Endothelial cell of umbilical vein (primary cell): ENCODE measurements at regions of chr20 and their contacts with region 1.

Region 1: GRCh38 chr20:6636209-6637159 is 131.0 kb upstream of the BMP2 start:
- DNase-seq: peak; percentile 85
- H3K4me3 ChIP-seq: no peak overlapping the region
- H3K27ac ChIP-seq: no peak overlapping the region
- H3K4me1 ChIP-seq: no peaks in the 10 kb centered on the region
- H3K27me3 ChIP-seq: no peaks in the 10 kb centered on the region
- CTCF ChIP-seq: peak; percentile 52 to 62
- POLR2A ChIP-seq: no peak

Region 2: GRCh38 chr20:6265204-6265904 is 371.1 kb before region 1 on chr20:
- CTCF ChIA-PET with region 1: interaction called, 17 read pairs
- POLR2A ChIA-PET with region 1: no interaction called
- dilution Hi-C with region 1: no loop called
- intact Hi-C with region 1: loop called (anchors 1 kb)
- DNase-seq: peak; percentile 82
- H3K4me3 ChIP-seq: peak overlapping the region in 1 of 3 experiments; percentile 59
- H3K27ac ChIP-seq: peak overlapping the region; percentile 18
- H3K4me1 ChIP-seq: peaks cover 10% of the 10 kb centered on the region
- H3K27me3 ChIP-seq: peaks cover 0 to 4% of the 10 kb centered on the region in 2 experiments
- CTCF ChIP-seq: peak; percentile 11 to 29
- POLR2A ChIP-seq: no peak

Region 3: DNA sequence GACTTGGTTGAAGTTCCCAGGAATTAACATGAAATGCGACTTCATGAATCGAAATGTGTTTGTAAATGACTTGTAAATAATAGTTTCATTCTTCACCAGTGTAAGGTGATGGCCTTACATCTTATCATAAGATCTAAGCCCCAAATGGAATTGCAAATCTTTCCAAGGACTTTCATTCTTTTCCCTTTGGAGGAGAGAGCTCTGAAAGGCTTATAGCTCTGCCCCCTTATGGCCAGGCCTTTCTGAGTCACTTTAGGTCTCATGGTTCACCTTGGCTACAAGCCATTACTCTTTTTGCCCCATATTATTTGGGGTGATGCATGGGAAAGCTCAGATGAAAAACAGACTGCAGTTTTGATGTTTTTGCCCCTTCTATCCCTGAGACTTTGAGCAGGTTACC is 78.1 kb before region 1 on chr20:
- CTCF ChIA-PET with region 1: no interaction called
- POLR2A ChIA-PET with region 1: no interaction called
- dilution Hi-C with region 1: no loop called
- intact Hi-C with region 1: no loop called
- DNase-seq: peak; percentile 18
- H3K4me3 ChIP-seq: no peak overlapping the region
- H3K27ac ChIP-seq: no peak overlapping the region
- H3K4me1 ChIP-seq: peaks cover 22% of the 10 kb centered on the region
- H3K27me3 ChIP-seq: no peaks in the 10 kb centered on the region
- CTCF ChIP-seq: no peak
- POLR2A ChIP-seq: no peak

Region 4: DNA sequence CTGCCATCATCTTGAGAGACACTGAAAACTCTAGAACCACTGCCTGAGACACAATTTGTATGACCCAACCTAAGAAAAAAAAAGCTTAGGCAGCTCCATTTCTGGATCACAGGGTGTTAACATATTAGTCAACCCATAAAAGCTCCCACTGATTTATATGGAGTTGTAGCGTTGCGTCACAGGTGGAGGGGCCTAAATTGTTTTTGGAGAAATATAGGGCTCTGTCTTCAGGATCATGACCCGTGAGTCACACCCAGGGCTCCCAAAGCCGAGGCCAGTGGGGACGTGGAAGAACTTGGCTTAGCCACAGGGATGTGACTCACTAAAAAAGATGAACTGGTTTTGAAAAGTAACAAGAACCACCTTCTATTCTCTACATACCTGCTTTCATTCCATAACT is 14.5 kb after region 1 on chr20:
- CTCF ChIA-PET with region 1: interaction called, 18 read pairs
- POLR2A ChIA-PET with region 1: no interaction called
- dilution Hi-C with region 1: no loop called
- intact Hi-C with region 1: no loop called
- DNase-seq: no peak
- H3K4me3 ChIP-seq: no peak overlapping the region
- H3K27ac ChIP-seq: no peak overlapping the region
- H3K4me1 ChIP-seq: no peaks in the 10 kb centered on the region
- H3K27me3 ChIP-seq: no peaks in the 10 kb centered on the region
- CTCF ChIP-seq: no peak
- POLR2A ChIP-seq: no peak

Region 5: GRCh38 chr20:6663104-6663503 is 26.6 kb after region 1 on chr20:
- CTCF ChIA-PET with region 1: interaction called, 13 read pairs
- POLR2A ChIA-PET with region 1: no interaction called
- dilution Hi-C with region 1: no loop called
- intact Hi-C with region 1: no loop called
- DNase-seq: peak; percentile 84
- H3K4me3 ChIP-seq: no peak overlapping the region
- H3K27ac ChIP-seq: no peak overlapping the region
- H3K4me1 ChIP-seq: peaks cover 18% of the 10 kb centered on the region
- H3K27me3 ChIP-seq: no peaks in the 10 kb centered on the region
- CTCF ChIP-seq: no peak
- POLR2A ChIP-seq: no peak

Region 6: GRCh38 chr20:6700563-6701329 is 64.3 kb after region 1 on chr20:
- CTCF ChIA-PET with region 1: interaction called, 5 read pairs
- POLR2A ChIA-PET with region 1: no interaction called
- dilution Hi-C with region 1: no loop called
- intact Hi-C with region 1: loop called (anchors 2 kb)
- DNase-seq: peak; percentile 90
- H3K4me3 ChIP-seq: no peak overlapping the region
- H3K27ac ChIP-seq: peak overlapping the region; percentile 45
- H3K4me1 ChIP-seq: peaks cover 68% of the 10 kb centered on the region
- H3K27me3 ChIP-seq: no peaks in the 10 kb centered on the region
- CTCF ChIP-seq: no peak
- POLR2A ChIP-seq: no peak

Region 7: GRCh38 chr20:6819605-6820004 is 183.1 kb after region 1 on chr20:
- CTCF ChIA-PET with region 1: interaction called, 27 read pairs
- POLR2A ChIA-PET with region 1: no interaction called
- dilution Hi-C with region 1: no loop called
- intact Hi-C with region 1: loop called (anchors 1 kb)
- DNase-seq: peak; percentile 46
- H3K4me3 ChIP-seq: no peak overlapping the region
- H3K27ac ChIP-seq: no peak overlapping the region
- H3K4me1 ChIP-seq: no peaks in the 10 kb centered on the region
- H3K27me3 ChIP-seq: peaks cover 0 to 2% of the 10 kb centered on the region in 2 experiments
- CTCF ChIP-seq: peak; percentile 16 to 27
- POLR2A ChIP-seq: no peak

Region 8: GRCh38 chr20:6855104-6855503 is 218.6 kb after region 1 on chr20:
- CTCF ChIA-PET with region 1: no interaction called
- POLR2A ChIA-PET with region 1: no interaction called
- dilution Hi-C with region 1: no loop called
- intact Hi-C with region 1: no loop called
- DNase-seq: no peak
- H3K4me3 ChIP-seq: no peak overlapping the region
- H3K27ac ChIP-seq: no peak overlapping the region
- H3K4me1 ChIP-seq: no peaks in the 10 kb centered on the region
- H3K27me3 ChIP-seq: peaks cover 0 to 2% of the 10 kb centered on the region in 2 experiments
- CTCF ChIP-seq: no peak
- POLR2A ChIP-seq: no peak